Activated B cell treated with CpG ODN at 0.5 μM for 24 hours (primary cell): ENCODE measurements at regions of chr7 and their contacts with region 1.

Region 1: DNA sequence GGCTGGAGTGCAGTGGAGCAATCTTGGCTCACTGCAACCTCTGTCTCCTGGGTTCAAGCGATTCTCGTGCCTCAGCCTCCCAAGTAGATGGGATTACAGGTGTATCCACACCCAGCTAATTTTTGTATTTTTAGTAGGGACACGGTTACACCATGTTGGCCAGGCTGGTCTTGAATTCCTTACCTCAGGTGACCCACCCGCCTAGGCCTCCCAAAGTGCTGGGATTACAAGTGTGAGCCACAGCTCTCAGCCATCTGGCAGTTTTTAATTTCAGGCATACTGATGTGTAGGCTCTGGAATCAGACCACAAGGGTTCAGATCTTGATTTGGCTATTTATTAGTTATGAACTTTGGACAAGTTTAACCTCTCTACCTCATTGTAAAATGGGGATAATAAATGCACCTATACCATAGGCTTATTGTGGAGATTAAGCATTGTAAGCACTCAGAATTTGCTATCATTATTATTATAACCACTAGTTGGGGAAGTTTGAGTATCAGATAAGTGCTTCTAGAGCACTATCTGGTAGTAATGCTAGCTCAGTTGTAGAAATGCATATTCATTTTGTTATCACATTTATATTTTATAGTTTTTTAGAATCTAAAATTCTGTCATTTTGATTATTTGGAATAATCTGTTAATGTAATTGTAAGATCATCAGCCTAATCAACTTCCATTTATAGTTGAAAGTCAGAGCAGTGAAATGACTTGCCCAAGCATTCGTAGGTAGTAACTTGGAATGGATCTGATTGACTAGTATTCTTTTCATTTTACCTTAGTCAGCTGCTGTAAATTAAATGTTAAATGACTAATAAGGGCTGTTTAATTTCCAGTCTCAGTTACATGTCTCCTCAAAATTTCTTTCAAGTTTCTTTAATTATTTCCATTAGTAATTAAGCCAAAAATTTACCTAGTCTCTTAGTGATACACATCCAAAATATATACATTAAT is 22.5 kb downstream of the KMT2E start:
- DNase-seq: no peak
- ATAC-seq: no peak
- H3K4me3 Mint-ChIP-seq: peak overlapping the region; percentile 7
- H3K27ac Mint-ChIP-seq: no peak overlapping the region
- H3K4me1 Mint-ChIP-seq: peaks cover 54% of the 10 kb centered on the region
- H3K27me3 Mint-ChIP-seq: no peaks in the 10 kb centered on the region
- CTCF ChIP-seq: no peak

Region 2: DNA sequence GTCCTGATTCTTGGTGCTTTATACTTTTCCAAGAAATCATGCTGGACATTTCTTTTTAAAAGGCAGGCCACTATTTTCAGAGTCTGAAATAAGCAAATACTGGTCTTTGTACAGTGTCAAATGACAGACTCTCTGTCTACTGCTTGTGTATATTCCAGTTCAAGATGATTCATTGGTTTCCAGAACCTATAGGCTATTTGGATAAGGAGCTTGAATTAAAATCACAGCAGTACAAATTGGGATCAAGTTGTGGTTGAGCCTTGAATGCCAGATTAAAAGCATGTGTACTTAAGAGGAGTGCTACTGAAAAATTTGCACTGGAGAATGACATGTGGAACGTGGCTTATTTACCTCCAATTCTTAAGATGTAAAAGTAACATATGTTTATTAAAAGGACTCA is 11.8 kb before region 1 on chr7:
- CTCF ChIA-PET with region 1: interaction called, 4 read pairs
- POLR2A ChIA-PET with region 1: no interaction called
- intact Hi-C with region 1: loop called (anchors 1 kb)
- DNase-seq: no peak
- ATAC-seq: no peak
- H3K4me3 Mint-ChIP-seq: no peak overlapping the region
- H3K27ac Mint-ChIP-seq: no peak overlapping the region
- H3K4me1 Mint-ChIP-seq: peaks cover 91% of the 10 kb centered on the region
- H3K27me3 Mint-ChIP-seq: no peaks in the 10 kb centered on the region
- CTCF ChIP-seq: no peak

Region 3: GRCh38 chr7:105060437-105060836 is 23.9 kb after region 1 on chr7:
- CTCF ChIA-PET with region 1: no interaction called
- POLR2A ChIA-PET with region 1: no interaction called
- intact Hi-C with region 1: loop called (anchors 2 kb)
- DNase-seq: no peak
- ATAC-seq: no peak
- H3K4me3 Mint-ChIP-seq: no peak overlapping the region
- H3K27ac Mint-ChIP-seq: no peak overlapping the region
- H3K4me1 Mint-ChIP-seq: peaks cover 40% of the 10 kb centered on the region
- H3K27me3 Mint-ChIP-seq: no peaks in the 10 kb centered on the region
- CTCF ChIP-seq: no peak